ENCODE measurements at regions of chr5 and their contacts with region 1.

Region 1: GRCh38 chr5:136364307-136364706 is 1.0 kb downstream of the TRPC7 start:
- DNase-seq: no peak
- CTCF ChIP-seq: no peak

Region 2: GRCh38 chr5:135944967-135945560 is 419.2 kb before region 1 on chr5:
- in situ Hi-C with region 1: no loop called
- DNase-seq: peak; percentile 55
- CTCF ChIP-seq: peak; percentile 47

Region 3: GRCh38 chr5:136232316-136232715 is 132.0 kb before region 1 on chr5:
- in situ Hi-C with region 1: no loop called
- DNase-seq: no peak
- CTCF ChIP-seq: no peak

Region 4: DNA sequence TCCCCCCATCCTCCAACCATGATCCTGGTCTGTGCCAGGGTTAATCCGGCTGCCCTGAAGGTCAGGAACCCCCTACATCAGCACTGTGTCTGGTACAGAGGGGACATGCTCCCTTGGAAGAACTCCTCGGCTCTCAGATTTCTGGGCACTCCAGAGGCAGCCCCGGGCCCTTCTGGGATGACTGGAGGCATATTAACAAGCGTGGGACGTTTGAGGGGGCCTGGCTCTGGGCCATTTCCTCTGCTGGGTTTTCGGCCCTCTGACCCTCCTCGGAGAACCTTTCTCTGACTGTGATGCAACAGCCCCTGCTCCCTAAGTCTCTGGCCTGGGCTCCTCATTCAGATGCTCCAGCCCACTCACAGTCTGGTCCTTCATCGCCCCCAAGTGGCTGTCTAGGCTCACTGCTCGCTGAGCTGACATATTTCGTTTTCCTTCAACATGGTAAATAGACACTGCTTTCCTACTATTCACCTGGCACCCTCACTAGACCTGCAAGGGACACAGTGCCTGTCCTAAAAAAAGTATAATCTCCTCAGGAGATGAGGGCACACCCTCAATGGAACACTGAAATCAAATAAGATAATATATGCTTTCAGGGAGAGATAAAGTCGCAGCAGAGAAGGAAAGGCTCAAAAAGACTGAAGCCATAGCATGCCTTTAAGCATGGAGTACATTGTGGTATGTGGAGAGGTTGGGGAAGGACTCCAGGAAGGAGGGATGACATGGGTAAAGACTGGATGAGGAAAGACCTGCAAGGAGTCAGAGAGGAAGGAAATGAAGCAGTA is 405.8 kb after region 1 on chr5:
- in situ Hi-C with region 1: loop called (anchors 10 kb)
- DNase-seq: peak; percentile 69
- CTCF ChIP-seq: peak; percentile 74

Measured in GM13976 (cell line).